Dorsolateral prefrontal cortex (tissue), 120 donors: ENCODE measurements at regions of chr2 and their contacts with region 1.

Region 1: GRCh38 chr2:36355151-36355889 is at the start of gene CRIM1:
- DNase-seq: peak; percentile 68 to 86 (median 80)
- H3K4me3 ChIP-seq: peak within 1 kb of the TSS; percentile 61 to 95 (median 82)
- H3K27ac ChIP-seq: peak within 1 kb of the TSS; percentile 57 to 98 (median 93)
- H3K27me3 ChIP-seq: no peaks in the 10 kb centered on the region
- CTCF ChIP-seq: peak in 22 of 56 donors; percentile 5 to 49 (median 26)
- total RNA-seq, gene CRIM1: 57.7 to 155 (median 82.6) TPM

Region 2: DNA sequence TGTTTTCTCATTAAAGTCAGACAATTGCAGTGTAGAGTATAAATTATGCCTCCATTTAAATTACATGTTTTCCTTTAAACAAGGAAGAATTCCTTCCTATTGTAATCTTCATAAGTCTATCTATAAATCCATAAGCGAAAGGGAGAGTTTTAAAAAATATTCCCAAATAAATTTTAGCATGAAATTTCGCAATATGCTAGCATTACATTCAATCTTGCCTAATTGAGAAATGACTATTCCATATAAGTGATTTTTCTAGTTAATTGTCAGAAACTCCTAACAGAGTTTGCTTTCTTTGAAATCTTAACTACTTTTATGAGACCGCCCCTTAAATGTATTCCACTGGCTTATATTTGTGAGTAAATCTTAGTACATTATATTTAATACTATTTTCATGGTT is 132.8 kb before region 1 on chr2:
- intact Hi-C with region 1: no loop called
- DNase-seq: no peak
- H3K4me3 ChIP-seq: no peak overlapping the region
- H3K27ac ChIP-seq: no peak overlapping the region
- H3K27me3 ChIP-seq: no peaks in the 10 kb centered on the region
- CTCF ChIP-seq: no peak

Region 3: DNA sequence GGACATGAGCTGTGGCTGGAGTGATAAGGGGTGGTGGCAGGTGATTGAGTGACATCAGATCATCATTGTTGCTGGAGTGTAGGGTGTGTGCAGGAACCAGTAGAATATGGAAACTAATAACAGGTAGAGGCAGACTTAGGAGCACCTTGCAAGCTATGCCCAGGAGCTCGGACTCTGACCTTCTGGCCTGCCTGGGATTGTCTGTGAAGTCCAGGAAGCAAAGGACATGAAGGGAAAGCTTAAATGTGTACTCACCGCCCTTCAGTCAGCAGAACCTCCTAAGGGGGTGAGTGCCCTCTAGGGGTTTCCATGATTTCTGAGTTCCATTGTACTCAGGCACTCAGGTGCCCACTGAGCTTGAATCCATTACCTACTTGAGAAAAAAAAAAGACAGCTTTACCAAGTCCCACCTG is 104.4 kb after region 1 on chr2:
- intact Hi-C with region 1: loop called (anchors 5 kb)
- DNase-seq: no peak
- H3K4me3 ChIP-seq: no peak overlapping the region
- H3K27ac ChIP-seq: peak overlapping the region in 3 of 59 donors; percentile 20 to 62 (median 25)
- H3K27me3 ChIP-seq: no peaks in the 10 kb centered on the region
- CTCF ChIP-seq: peak in 53 of 56 donors; percentile 17 to 68 (median 44)

Region 4: GRCh38 chr2:36561237-36561944 is 206.1 kb after region 1 on chr2:
- intact Hi-C with region 1: loop called (anchors 10 kb)
- DNase-seq: peak in 2 of 10 donors; percentile 49 to 53
- H3K4me3 ChIP-seq: no peak overlapping the region
- H3K27ac ChIP-seq: peak overlapping the region in 43 of 59 donors; percentile 2 to 89 (median 70)
- H3K27me3 ChIP-seq: no peaks in the 10 kb centered on the region
- CTCF ChIP-seq: no peak

Region 5: DNA sequence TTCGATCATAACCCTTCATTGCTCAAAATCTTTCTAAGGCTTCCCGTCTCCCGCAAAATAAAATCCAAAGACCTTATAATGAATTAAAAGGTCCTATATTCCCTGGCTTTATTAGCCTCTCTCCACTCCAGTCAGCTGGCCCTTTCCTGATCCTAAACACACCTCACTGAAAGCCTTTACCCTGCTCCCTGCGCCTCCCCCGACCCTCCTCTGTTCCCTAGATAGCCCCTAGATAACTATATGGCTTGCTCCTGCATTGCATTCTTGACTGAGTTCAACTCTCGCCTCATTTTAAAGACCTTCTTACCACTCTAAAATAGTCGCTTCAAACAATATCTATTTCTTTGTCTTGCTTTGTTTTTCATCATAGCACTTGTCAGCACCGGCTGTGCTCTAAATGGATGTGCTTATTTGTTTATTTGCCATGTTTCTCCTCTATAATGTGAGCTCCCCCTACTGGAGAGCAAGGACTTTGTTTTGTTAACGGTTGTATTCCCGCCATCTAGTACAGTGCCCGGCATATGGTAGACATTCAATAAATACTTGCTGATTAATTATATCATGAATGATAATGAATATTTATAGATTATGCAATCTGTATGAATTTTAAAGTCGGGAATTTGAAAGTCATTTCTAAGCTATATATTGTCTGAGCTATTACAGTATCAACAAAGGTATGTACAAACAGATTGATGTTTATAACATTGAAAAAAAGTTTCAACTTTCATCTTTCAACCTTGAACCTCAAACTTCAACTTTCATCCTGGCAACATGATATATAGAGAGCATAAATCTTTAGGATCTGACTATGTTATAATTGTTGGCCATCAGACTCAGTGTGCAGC is 308.8 kb after region 1 on chr2:
- intact Hi-C with region 1: loop called (anchors 2 to 5 kb)
- DNase-seq: peak in 2 of 10 donors; percentile 3 to 11
- H3K4me3 ChIP-seq: peak overlapping the region in 9 of 59 donors; percentile 10 to 40 (median 17)
- H3K27ac ChIP-seq: no peak overlapping the region
- H3K27me3 ChIP-seq: peaks cover 0 to 3% (median 0%) of the 10 kb centered on the region in 45 donors
- CTCF ChIP-seq: peak; percentile 66 to 92 (median 82)